H1 (cell line): ENCODE measurements at regions of chr20 and their contacts with region 1.

Region 1: GRCh38 chr20:32521780-32522525 is 63.2 kb downstream of the NOL4L start:
- DNase-seq: peak; percentile 54 to 92
- H3K4me3 ChIP-seq: peak overlapping the region in 1 of 4 experiments; percentile 23; a peak in 1 of 8 replicates
- H3K27ac ChIP-seq: no peak overlapping the region
- H3K4me1 ChIP-seq: peaks cover 0 to 7% (median under 1%) of the 10 kb centered on the region in 4 experiments; a peak in 4 of 7 replicates
- H3K27me3 ChIP-seq: 0 out of 7 replicates have a peak, but pooled peaks cover 0 to 2% (median 0%) of the 10 kb centered on the region in 4 experiments
- CTCF ChIP-seq: peak; percentile 96 to 98 (median 97)
- EP300 ChIP-seq: no peak
- POLR2A ChIP-seq: no peak
- RAD21 ChIP-seq: peak; percentile 100

Region 2: DNA sequence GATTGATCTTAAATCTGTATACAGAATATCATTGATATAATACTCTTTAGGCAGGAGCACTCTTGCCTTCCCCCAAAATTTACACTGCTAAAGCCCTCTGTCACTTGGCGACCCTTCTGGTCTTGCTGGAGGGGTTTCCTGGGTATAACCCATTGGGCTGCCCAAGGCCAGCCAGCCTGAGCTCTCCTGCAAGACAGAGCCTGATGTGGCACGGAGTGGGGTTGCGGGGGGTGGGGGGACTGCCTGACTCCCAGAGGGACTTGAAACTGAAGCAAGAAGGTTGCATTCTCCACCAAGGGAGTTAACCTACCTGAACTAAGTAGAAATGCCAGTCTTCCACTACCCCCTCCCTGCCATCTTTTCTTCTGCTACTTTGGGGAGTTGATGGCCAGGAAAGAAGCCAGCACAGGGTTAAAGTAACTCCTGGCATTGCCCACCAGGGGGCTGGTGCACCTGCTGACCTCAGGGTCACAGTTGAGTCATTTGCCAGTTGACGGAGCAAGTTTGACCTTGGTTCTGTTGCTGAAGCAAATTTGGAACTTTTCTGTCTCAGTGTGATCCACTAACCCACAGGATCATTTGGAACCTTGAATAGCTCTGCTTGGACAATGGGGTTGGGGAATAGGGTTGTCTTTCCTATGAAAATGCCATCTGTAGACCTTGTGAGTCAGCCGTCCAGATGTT is 84.4 kb before region 1 on chr20:
- CTCF ChIA-PET with region 1: no interaction called
- POLR2A ChIA-PET with region 1: no interaction called
- DNase-seq: no peak
- H3K4me3 ChIP-seq: no peak overlapping the region
- H3K27ac ChIP-seq: no peak overlapping the region
- H3K4me1 ChIP-seq: peaks cover 0 to 3% (median 0%) of the 10 kb centered on the region in 4 experiments; a peak in 1 of 7 replicates
- H3K27me3 ChIP-seq: no peaks in the 10 kb centered on the region
- CTCF ChIP-seq: peak; percentile 46 to 59 (median 56)
- EP300 ChIP-seq: no peak
- POLR2A ChIP-seq: no peak
- RAD21 ChIP-seq: peak; percentile 42 to 53

Region 3: DNA sequence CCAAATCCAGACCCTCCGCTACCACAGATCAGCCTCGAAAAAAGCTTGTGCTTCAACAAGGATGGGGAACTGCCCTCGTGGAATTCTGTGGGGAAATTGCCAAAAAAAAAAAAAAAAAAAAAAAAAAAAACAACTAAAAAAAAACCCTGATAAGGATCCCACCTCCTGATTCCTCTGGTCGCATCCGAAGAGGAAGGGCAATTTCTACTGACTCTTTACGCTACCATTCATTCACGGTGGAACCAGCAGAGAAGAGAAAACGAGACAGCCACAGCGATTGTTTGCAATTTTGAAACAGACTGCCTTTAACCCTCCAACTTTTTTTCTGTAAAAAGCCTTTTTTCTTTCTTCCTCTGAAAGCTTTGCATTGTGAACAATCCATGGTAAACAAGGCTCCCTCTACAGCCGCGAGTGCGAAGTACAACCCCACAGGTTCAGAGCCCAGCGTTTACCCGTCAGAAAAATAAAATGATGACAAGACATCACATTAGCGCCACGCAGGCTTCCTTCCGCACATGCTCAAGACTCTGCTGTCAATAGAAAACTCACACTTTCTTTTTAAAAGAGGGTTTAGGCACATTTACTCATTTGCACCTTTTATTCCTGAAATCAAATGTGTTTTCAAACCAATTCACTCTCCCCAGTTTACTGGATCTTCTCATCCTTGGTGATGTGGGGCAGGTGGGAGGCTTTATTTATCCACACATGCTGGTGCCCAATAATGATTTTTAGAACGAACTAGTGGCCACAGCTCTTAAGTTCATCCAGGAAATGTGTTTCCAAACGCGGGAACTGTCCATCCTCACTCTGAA is 36.8 kb before region 1 on chr20:
- CTCF ChIA-PET with region 1: interaction called, 10 read pairs
- POLR2A ChIA-PET with region 1: no interaction called
- DNase-seq: peak in 1 of 2 experiments; percentile 70
- H3K4me3 ChIP-seq: peak overlapping the region; percentile 71 to 90 (median 82)
- H3K27ac ChIP-seq: no peak overlapping the region
- H3K4me1 ChIP-seq: peaks cover 11 to 15% (median 13%) of the 10 kb centered on the region in 4 experiments
- H3K27me3 ChIP-seq: no peaks in the 10 kb centered on the region
- CTCF ChIP-seq: peak; percentile 55 to 68 (median 65)
- EP300 ChIP-seq: no peak
- POLR2A ChIP-seq: 0 out of 3 replicates have a peak, but pooled peaks of 1 of the 2 experiments have one; percentile 4
- RAD21 ChIP-seq: peak; percentile 41 to 50; a peak in 3 of 4 replicates

Region 4: DNA sequence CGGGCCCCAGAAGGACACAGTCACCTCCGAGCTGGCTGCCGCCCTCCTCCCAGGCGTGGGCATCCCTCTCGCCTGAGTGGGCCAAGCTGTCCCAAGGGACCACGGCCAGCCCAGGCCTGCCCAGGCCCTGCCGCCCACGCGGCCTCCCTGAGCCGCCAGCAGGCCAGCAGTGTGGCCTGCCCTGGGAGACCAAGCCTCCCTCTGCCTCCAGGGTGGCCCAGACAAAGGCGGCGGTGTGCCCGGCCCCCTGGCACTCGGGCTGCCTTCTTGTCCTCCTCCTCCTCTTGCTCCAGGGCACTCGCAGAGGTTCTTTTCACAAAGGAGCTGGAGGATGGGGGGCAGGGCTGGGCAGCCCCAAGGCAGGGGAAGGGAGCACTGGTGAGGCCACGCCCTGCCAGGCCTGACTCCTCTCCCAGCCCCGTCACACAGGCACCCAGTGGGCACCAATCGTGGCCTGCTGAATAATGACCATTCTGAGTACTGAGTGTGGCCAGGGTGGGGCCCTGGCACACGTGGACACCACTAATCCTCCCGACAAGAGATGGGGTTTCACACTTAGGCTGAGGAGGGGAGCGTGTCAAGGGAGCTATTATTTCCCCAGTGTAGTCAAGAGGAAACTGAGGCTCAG is 37.9 kb after region 1 on chr20:
- CTCF ChIA-PET with region 1: interaction called, 20 read pairs
- POLR2A ChIA-PET with region 1: interaction called, 3 read pairs
- DNase-seq: no peak
- H3K4me3 ChIP-seq: no peak overlapping the region
- H3K27ac ChIP-seq: no peak overlapping the region
- H3K4me1 ChIP-seq: peaks cover 3 to 27% (median 14%) of the 10 kb centered on the region in 4 experiments
- H3K27me3 ChIP-seq: no peaks in the 10 kb centered on the region
- CTCF ChIP-seq: no peak
- EP300 ChIP-seq: no peak
- POLR2A ChIP-seq: no peak
- RAD21 ChIP-seq: no peak

Region 5: DNA sequence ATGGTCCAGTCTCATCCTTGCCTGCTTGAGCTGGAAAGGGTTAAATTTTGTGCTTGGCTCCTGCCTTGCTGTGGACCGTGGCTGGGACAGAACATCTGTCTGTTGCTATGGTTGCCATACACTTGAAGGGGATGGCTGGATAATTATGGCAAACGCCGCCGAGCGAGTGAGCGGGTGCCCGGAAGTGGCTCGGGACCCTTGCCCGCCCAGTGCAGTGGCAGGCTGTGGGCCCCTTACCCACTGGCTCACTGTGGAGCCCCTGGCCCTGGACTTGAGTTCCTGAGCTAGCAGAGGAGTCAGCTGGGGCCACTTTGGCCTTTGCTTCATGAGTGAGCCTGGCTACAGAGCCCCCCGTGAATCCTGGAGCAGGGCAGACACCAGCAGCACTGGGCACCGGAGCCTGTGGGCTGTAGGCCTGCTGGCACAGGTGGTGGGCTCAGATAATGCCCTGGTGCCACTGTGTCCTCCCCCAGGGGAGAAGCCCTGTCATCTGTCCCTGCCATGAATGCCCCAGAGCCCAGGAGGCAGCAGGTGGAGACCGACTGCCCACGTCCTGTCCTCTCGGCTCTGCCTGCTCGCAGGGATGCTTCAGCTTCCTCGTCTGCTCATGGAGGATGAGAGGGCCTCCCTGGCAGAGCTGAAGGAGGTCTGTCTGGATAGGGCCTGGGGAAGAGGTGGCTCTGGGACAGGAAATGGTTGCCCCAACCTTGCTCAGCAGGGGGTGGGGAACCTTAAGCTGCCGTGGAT is 88.7 kb after region 1 on chr20:
- CTCF ChIA-PET with region 1: interaction called, 12 read pairs
- POLR2A ChIA-PET with region 1: no interaction called
- DNase-seq: no peak
- H3K4me3 ChIP-seq: no peak overlapping the region
- H3K27ac ChIP-seq: no peak overlapping the region
- H3K4me1 ChIP-seq: peaks cover 0 to 10% (median 4%) of the 10 kb centered on the region in 4 experiments; a peak in 5 of 7 replicates
- H3K27me3 ChIP-seq: peaks cover 0 to 5% (median 0%) of the 10 kb centered on the region in 4 experiments; a peak in 1 of 7 replicates
- CTCF ChIP-seq: no peak
- EP300 ChIP-seq: no peak
- POLR2A ChIP-seq: no peak
- RAD21 ChIP-seq: no peak

Region 6: GRCh38 chr20:32626859-32627636 is 105.1 kb after region 1 on chr20:
- CTCF ChIA-PET with region 1: interaction called, 31 read pairs
- POLR2A ChIA-PET with region 1: no interaction called
- DNase-seq: no peak
- H3K4me3 ChIP-seq: no peak overlapping the region
- H3K27ac ChIP-seq: no peak overlapping the region
- H3K4me1 ChIP-seq: peaks cover 0 to 13% (median 9%) of the 10 kb centered on the region in 4 experiments; a peak in 6 of 7 replicates
- H3K27me3 ChIP-seq: no peaks in the 10 kb centered on the region; a peak in 1 of 7 replicates
- CTCF ChIP-seq: no peak
- EP300 ChIP-seq: no peak
- POLR2A ChIP-seq: no peak
- RAD21 ChIP-seq: no peak

Region 7: DNA sequence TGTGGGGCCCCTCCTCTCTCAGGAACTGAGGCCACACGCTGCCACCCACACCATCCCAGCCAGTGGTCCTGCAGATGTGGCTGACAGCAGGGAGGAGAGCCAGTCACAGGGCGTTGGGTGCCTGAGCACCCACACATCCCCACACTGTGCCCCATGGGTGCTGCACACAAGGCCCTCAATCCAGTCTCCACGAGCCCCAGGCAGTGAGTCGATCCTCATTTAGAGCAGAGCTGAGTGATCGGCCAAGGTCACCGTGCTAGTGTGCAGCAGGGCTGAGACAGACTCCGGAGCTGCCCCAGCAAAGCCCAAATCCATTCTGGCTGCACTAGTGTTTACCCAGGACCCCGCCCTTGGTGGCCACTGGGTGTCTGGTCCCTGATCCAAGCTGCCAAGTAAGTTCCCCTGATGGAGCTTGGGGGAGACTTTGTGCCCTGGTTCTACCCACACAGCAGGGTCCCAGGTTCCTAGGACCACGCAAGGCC is 142.8 kb after region 1 on chr20:
- CTCF ChIA-PET with region 1: interaction called, 85 read pairs
- POLR2A ChIA-PET with region 1: no interaction called
- DNase-seq: no peak
- H3K4me3 ChIP-seq: no peak overlapping the region
- H3K27ac ChIP-seq: no peak overlapping the region
- H3K4me1 ChIP-seq: peaks cover 0 to 3% (median 1%) of the 10 kb centered on the region in 4 experiments; a peak in 5 of 7 replicates
- H3K27me3 ChIP-seq: no peaks in the 10 kb centered on the region
- CTCF ChIP-seq: no peak
- EP300 ChIP-seq: no peak
- POLR2A ChIP-seq: no peak
- RAD21 ChIP-seq: no peak